ENCODE measurements at regions of chr16 and their contacts with region 1.

Region 1: DNA sequence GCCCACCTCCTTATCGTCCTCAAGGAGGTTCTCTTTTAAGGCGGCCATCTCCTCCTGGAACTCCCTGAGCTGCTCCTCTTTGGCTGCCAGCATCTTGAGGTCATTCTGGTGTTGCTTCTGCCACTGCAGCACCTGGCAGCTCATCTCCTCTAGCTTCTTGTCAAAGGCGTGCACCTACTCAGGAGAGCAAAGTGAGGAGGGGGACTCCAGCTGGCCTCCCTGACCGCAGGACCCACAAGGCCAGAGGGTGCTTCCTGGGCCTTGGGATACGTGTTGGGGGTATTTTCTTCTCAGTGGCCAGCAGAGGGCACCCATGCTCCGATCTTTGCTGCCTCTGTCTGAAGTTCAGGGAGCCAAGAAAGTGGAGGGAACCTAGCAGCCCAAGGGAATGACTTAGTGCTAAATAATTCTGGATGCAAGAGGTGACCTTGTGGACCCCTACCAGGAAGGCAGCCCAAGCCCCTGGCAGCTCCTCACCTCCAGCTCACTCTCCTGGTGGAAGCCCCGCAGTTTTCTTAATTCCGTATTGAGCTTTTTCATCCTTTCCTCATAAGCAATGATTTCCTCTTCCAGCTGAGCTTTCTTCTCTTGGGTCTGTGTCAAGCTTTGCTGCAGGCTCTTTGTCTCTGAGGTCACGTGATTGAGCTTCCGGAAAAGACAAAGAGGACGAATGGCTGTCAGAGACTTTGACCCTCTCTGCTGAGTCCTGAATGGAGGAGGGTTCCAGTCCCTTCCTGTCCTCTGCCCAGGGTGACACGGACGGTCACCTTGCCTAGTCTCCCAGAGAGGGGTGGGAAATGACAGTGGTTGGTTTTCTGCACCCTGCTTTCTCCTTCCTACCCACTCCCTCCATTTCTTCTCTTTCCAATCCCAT is 31.4 kb downstream of the DHX38 start:
- DNase-seq: peak; percentile 84
- H3K4me3 Mint-ChIP-seq: no peak overlapping the region
- H3K27ac Mint-ChIP-seq: no peak overlapping the region
- H3K4me1 Mint-ChIP-seq: peaks cover 18% of the 10 kb centered on the region
- H3K27me3 Mint-ChIP-seq: no peaks in the 10 kb centered on the region
- CTCF ChIP-seq: peak; percentile 87

Region 2: GRCh38 chr16:71709231-71709781 is 415.7 kb before region 1 on chr16:
- CTCF ChIA-PET with region 1: no interaction called
- intact Hi-C with region 1: no loop called
- DNase-seq: no peak
- H3K4me3 Mint-ChIP-seq: no peak overlapping the region
- H3K27ac Mint-ChIP-seq: no peak overlapping the region
- H3K4me1 Mint-ChIP-seq: peaks cover 13% of the 10 kb centered on the region
- H3K27me3 Mint-ChIP-seq: no peaks in the 10 kb centered on the region
- CTCF ChIP-seq: no peak

Region 3: GRCh38 chr16:71867939-71868338 is 257.1 kb before region 1 on chr16:
- CTCF ChIA-PET with region 1: no interaction called
- intact Hi-C with region 1: no loop called
- DNase-seq: no peak
- H3K4me3 Mint-ChIP-seq: no peak overlapping the region
- H3K27ac Mint-ChIP-seq: no peak overlapping the region
- H3K4me1 Mint-ChIP-seq: no peaks in the 10 kb centered on the region
- H3K27me3 Mint-ChIP-seq: no peaks in the 10 kb centered on the region
- CTCF ChIP-seq: peak; percentile 15

Region 4: GRCh38 chr16:72236866-72237265 is 111.9 kb after region 1 on chr16:
- CTCF ChIA-PET with region 1: interaction called, 3 read pairs
- intact Hi-C with region 1: loop called (anchors 2 kb)
- DNase-seq: no peak
- H3K4me3 Mint-ChIP-seq: no peak overlapping the region
- H3K27ac Mint-ChIP-seq: no peak overlapping the region
- H3K4me1 Mint-ChIP-seq: no peaks in the 10 kb centered on the region
- H3K27me3 Mint-ChIP-seq: no peaks in the 10 kb centered on the region
- CTCF ChIP-seq: no peak